ENCODE measurements at regions of chr16 and their contacts with region 1.

Region 1: DNA sequence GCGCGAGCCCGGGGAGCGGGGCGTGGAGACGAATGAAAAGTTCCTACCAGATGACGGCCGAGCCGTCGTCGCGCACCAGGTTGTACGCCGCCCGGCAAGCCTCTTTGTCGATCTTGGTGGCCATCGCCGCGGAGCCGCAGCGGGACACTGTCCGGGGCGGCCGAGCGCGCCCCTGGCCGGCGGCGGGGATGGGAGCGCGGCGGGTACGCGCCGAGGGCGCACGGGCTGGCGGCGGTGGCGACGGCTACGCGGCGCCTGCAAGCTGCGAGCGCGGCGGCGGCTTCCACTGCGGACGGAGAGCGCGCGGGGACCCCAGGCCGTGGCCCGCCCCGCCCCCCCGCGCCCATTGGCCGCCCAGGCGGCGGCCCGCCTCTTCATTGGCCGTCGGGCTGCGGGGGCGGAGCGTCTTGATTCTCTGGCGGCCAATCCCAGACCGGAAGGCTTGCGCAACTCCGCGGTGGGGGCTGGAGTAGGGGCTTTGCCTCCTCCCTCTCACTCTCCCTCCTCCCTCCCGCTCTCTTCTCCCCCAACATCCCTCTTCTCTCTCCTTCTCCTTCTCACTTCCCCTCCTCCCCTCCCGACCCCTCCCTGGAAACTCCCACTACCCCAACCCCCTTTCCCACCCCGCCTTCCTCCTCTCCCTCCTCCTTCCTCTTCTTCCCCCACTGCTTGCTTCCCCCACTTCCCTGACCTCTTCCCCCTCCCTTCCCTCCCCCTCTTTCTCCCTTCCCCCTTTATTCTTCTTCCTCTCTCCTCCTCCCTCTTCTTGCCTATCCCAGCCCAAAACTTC is at the start of gene COTL1:
- DNase-seq: peak; percentile 99
- ATAC-seq: peak; percentile 78
- H3K4me3 ChIP-seq: peak within 1 kb of the TSS; percentile 90
- H3K27ac ChIP-seq: peak within 1 kb of the TSS; percentile 97
- H3K4me1 ChIP-seq: peaks cover 27% of the 10 kb centered on the region
- H3K27me3 ChIP-seq: no peaks in the 10 kb centered on the region
- CTCF ChIP-seq: no peak
- POLR2A ChIP-seq: peak; percentile 97
- RAD21 ChIP-seq: no peak
- total RNA-seq, gene COTL1: 144 and 166 TPM in 2 replicates

Region 2: DNA sequence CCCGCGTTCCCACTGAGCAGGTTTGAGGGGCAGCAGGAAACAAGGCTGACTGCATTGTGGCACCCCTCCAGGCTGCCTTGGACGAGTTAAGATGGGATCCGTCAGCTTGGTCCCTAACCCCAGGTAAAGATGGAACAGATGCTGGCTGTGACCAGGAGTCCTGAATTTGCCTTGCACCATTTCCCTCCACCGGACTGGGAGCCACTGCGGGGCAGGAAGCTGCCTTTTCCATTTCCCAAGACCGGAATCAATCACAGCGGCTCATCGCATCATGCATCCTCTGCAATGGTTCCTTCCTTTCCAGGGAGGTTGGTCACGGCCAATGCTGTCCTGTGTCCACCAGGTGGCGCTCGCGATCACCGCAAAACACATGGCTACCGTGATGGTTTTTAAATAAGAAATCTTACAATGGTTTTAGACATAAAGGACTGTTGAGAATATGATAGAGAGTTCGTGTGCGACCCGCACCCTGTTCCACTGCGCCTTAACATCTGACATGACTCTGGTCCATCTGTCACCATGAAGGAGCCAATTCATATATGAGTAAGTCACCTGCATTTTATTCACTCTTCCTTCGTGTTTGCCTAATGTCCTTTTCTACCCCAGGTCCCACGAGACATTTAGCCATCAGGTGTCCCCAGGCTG is 106.7 kb before region 1 on chr16:
- CTCF ChIA-PET with region 1: interaction called, 7 read pairs
- POLR2A ChIA-PET with region 1: interaction called, 4 read pairs
- dilution Hi-C with region 1: no loop called
- in situ Hi-C with region 1: loop called (anchors 5 kb)
- intact Hi-C with region 1: loop called (anchors 1 kb)
- DNase-seq: peak; percentile 86
- ATAC-seq: peak; percentile 95
- H3K4me3 ChIP-seq: no peak overlapping the region
- H3K27ac ChIP-seq: no peak overlapping the region
- H3K4me1 ChIP-seq: peaks cover 8% of the 10 kb centered on the region
- H3K27me3 ChIP-seq: no peaks in the 10 kb centered on the region
- CTCF ChIP-seq: peak; percentile 90
- POLR2A ChIP-seq: no peak
- RAD21 ChIP-seq: peak; percentile 92

Region 3: DNA sequence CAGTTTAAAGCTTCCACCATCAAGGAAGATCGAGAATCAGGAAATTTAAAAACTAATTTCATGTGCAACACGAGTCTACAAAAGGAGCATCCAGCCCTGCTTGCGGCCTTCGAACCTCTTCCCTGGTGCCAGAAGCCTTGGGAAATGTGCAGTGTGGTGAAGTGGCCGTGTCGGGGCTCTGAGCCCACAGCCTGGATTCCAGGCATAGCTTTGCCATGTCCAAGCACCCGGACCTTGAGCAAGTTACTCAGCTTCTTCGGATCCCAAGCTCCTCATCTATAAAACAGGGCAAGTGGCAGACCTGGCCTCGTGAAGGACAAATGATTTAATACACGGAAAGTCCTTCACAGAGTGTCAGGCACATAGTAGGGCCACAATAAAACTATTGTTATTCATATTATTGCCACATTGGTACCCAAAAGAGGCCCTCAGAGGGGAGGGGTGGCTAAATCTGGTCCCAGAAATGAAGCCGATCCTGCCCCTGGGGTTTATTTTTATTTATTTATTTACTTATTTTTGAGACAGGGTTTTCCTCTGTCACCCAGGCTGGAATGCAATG is 34.9 kb before region 1 on chr16:
- CTCF ChIA-PET with region 1: interaction called, 3 read pairs
- POLR2A ChIA-PET with region 1: no interaction called
- dilution Hi-C with region 1: no loop called
- in situ Hi-C with region 1: no loop called
- intact Hi-C with region 1: loop called (anchors 1 kb)
- DNase-seq: peak; percentile 81
- ATAC-seq: peak; percentile 95
- H3K4me3 ChIP-seq: no peak overlapping the region
- H3K27ac ChIP-seq: no peak overlapping the region
- H3K4me1 ChIP-seq: peaks cover 9% of the 10 kb centered on the region
- H3K27me3 ChIP-seq: no peaks in the 10 kb centered on the region
- CTCF ChIP-seq: no peak
- POLR2A ChIP-seq: no peak
- RAD21 ChIP-seq: peak; percentile 40

Region 4: GRCh38 chr16:84726079-84726668 is 108.2 kb after region 1 on chr16:
- CTCF ChIA-PET with region 1: interaction called, 5 read pairs
- POLR2A ChIA-PET with region 1: no interaction called
- dilution Hi-C with region 1: no loop called
- in situ Hi-C with region 1: loop called (anchors 5 kb)
- intact Hi-C with region 1: loop called (anchors 1 kb)
- DNase-seq: peak; percentile 85
- ATAC-seq: peak; percentile 66
- H3K4me3 ChIP-seq: no peak overlapping the region
- H3K27ac ChIP-seq: peak overlapping the region; percentile 24
- H3K4me1 ChIP-seq: peaks cover 15% of the 10 kb centered on the region
- H3K27me3 ChIP-seq: no peaks in the 10 kb centered on the region
- CTCF ChIP-seq: peak; percentile 95
- POLR2A ChIP-seq: no peak
- RAD21 ChIP-seq: peak; percentile 96

Region 5: GRCh38 chr16:84952335-84953189 is 334.6 kb after region 1 on chr16:
- CTCF ChIA-PET with region 1: no interaction called
- POLR2A ChIA-PET with region 1: no interaction called
- dilution Hi-C with region 1: no loop called
- in situ Hi-C with region 1: no loop called
- intact Hi-C with region 1: loop called (anchors 5 kb)
- DNase-seq: peak; percentile 82
- ATAC-seq: peak; percentile 97
- H3K4me3 ChIP-seq: no peak overlapping the region
- H3K27ac ChIP-seq: no peak overlapping the region
- H3K4me1 ChIP-seq: peaks cover 7% of the 10 kb centered on the region; the same call in 1 of the 2 replicates
- H3K27me3 ChIP-seq: no peaks in the 10 kb centered on the region
- CTCF ChIP-seq: peak; percentile 84
- POLR2A ChIP-seq: 0 out of 2 replicates have a peak, but pooled peaks have one; percentile 25
- RAD21 ChIP-seq: peak; percentile 83

Measured in IMR-90 (cell line).